ENCODE measurements at regions of chr10 and their contacts with region 1.

Region 1: GRCh38 chr10:13586676-13587355 is at the start of gene PRPF18:
- DNase-seq: peak; percentile 91 to 95 (median 92)
- H3K4me3 ChIP-seq: peak within 1 kb of the TSS; percentile 88 to 95
- H3K4me3 Mint-ChIP-seq: peak within 1 kb of the TSS; percentile 98 to 100 (median 100)
- H3K27ac ChIP-seq: peak within 1 kb of the TSS; percentile 65
- H3K27ac Mint-ChIP-seq: peak within 1 kb of the TSS; percentile 72 to 100 (median 100)
- H3K4me1 ChIP-seq: peaks cover 24% of the 10 kb centered on the region
- H3K4me1 Mint-ChIP-seq: peaks cover 24 to 49% (median 34%) of the 10 kb centered on the region in 4 donors
- H3K27me3 ChIP-seq: no peaks in the 10 kb centered on the region
- H3K27me3 Mint-ChIP-seq: peaks cover 11 to 21% of the 10 kb centered on the region in 2 donors
- total RNA-seq, gene PRPF18: 30.3 TPM

Region 2: DNA sequence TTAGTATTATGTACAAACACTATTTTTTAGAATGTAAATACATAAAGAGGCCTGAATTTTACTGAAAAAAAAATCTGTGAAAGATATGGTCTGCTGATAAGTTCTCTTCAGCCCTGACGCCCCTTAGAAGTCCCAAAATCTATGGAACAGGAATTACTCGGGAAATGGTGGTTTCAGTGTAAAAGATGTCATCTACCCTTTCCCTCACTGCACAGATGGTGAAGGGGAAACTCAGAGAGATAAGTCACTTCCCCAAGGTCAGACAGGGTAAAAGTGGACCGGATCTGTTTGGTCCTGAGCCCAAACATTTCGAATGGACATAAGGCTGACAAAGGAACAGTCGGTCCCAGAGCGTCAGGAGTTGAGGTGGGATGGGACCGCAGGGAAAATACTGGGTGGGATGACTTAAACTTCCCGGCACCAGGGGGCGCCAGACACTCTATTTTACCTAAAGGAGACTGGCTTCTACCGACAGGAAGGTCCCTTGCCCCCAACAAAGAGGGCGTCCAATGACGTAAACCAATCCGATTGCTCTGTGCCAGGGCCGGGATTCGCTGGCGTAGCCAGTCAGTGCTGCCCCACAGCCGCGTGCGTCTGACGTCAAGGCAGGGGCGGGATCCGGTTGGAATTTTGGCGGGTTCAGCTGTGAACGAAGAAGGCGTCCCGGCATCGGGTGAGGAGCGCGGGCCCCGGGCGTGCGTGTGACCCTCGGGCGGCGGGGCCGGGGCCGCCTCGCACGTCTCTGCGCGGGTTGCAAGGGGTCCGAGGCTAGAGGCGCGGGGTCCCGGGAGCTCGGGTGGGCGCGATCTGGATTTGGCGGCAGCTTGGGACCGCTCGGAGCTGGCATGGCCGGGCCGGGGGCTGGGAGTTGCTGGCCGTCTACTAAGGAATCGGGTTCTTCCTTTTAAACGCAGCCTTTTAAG is 425.6 kb before region 1 on chr10 and contains the start of gene MCM10:
- CTCF ChIA-PET with region 1: no interaction called
- POLR2A ChIA-PET with region 1: no interaction called
- intact Hi-C with region 1: loop called (anchors 1 kb)
- DNase-seq: peak; percentile 95 to 99 (median 97)
- H3K4me3 ChIP-seq: peak within 1 kb of the TSS; percentile 50 to 58
- H3K4me3 Mint-ChIP-seq: peak within 1 kb of the TSS; percentile 82 to 94 (median 88)
- H3K27ac ChIP-seq: peak within 1 kb of the TSS; percentile 33
- H3K27ac Mint-ChIP-seq: peak within 1 kb of the TSS; percentile 82 to 94 (median 88)
- H3K4me1 ChIP-seq: peaks cover 15% of the 10 kb centered on the region
- H3K4me1 Mint-ChIP-seq: peaks cover 15 to 36% (median 23%) of the 10 kb centered on the region in 4 donors
- H3K27me3 ChIP-seq: no peaks in the 10 kb centered on the region
- H3K27me3 Mint-ChIP-seq: no peaks in the 10 kb centered on the region
- total RNA-seq, gene MCM10: 0.17 TPM in 1 of 2 experiments, not detected in the other

Region 3: GRCh38 chr10:13348216-13349017 is 238.4 kb before region 1 on chr10 and contains the start of gene SEPHS1:
- CTCF ChIA-PET with region 1: no interaction called
- POLR2A ChIA-PET with region 1: interaction called, 5 read pairs
- intact Hi-C with region 1: loop called (anchors 1 kb)
- DNase-seq: peak; percentile 79 to 87 (median 80)
- H3K4me3 ChIP-seq: peak within 1 kb of the TSS; percentile 89 to 93
- H3K4me3 Mint-ChIP-seq: peak within 1 kb of the TSS; percentile 94 to 97 (median 96)
- H3K27ac ChIP-seq: peak within 1 kb of the TSS; percentile 75
- H3K27ac Mint-ChIP-seq: peak within 1 kb of the TSS; percentile 88 to 97 (median 96)
- H3K4me1 ChIP-seq: peaks cover 50% of the 10 kb centered on the region
- H3K4me1 Mint-ChIP-seq: peaks cover 33 to 76% (median 51%) of the 10 kb centered on the region in 4 donors
- H3K27me3 ChIP-seq: no peaks in the 10 kb centered on the region
- H3K27me3 Mint-ChIP-seq: no peaks in the 10 kb centered on the region
- total RNA-seq, gene SEPHS1: 27.2 to 30.6 TPM

Region 4: DNA sequence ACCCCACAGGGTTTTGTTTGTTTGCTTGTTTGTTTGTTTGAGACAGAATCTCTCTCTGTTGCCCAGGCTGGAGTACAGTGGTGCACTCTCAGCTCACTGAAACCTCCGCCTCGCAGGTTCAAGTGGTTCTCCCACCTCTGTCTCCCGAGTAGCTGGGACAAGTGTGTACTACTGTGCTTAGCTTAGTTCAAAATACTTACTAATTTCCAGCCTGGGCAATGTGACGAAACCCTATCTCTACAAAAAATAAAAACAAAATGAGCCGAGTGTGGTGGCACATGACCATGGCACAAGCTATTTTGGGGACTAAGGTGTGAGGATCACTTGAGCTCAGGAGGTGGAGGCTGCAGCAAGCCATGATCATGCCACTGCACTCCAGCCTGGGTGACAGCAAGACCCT is 15.3 kb before region 1 on chr10:
- CTCF ChIA-PET with region 1: no interaction called
- POLR2A ChIA-PET with region 1: no interaction called
- intact Hi-C with region 1: no loop called
- DNase-seq: no peak
- H3K4me3 ChIP-seq: no peak overlapping the region
- H3K4me3 Mint-ChIP-seq: no peak overlapping the region
- H3K27ac ChIP-seq: no peak overlapping the region
- H3K27ac Mint-ChIP-seq: no peak overlapping the region
- H3K4me1 ChIP-seq: no peaks in the 10 kb centered on the region
- H3K4me1 Mint-ChIP-seq: peaks cover 0 to 2% (median under 1%) of the 10 kb centered on the region in 4 donors
- H3K27me3 ChIP-seq: no peaks in the 10 kb centered on the region
- H3K27me3 Mint-ChIP-seq: peaks cover 13 to 22% of the 10 kb centered on the region in 2 donors

Region 5: GRCh38 chr10:13776861-13777311 is 190.1 kb after region 1 on chr10:
- CTCF ChIA-PET with region 1: interaction called, 4 read pairs
- POLR2A ChIA-PET with region 1: interaction called, 3 read pairs
- intact Hi-C with region 1: loop called (anchors 2 kb)
- DNase-seq: no peak
- H3K4me3 ChIP-seq: no peak overlapping the region
- H3K4me3 Mint-ChIP-seq: no peak overlapping the region
- H3K27ac ChIP-seq: no peak overlapping the region
- H3K27ac Mint-ChIP-seq: no peak overlapping the region
- H3K4me1 ChIP-seq: no peaks in the 10 kb centered on the region
- H3K4me1 Mint-ChIP-seq: peaks cover 0 to 6% (median 2%) of the 10 kb centered on the region in 4 donors
- H3K27me3 ChIP-seq: no peaks in the 10 kb centered on the region
- H3K27me3 Mint-ChIP-seq: peaks cover 20 to 21% of the 10 kb centered on the region in 2 donors

Region 6: DNA sequence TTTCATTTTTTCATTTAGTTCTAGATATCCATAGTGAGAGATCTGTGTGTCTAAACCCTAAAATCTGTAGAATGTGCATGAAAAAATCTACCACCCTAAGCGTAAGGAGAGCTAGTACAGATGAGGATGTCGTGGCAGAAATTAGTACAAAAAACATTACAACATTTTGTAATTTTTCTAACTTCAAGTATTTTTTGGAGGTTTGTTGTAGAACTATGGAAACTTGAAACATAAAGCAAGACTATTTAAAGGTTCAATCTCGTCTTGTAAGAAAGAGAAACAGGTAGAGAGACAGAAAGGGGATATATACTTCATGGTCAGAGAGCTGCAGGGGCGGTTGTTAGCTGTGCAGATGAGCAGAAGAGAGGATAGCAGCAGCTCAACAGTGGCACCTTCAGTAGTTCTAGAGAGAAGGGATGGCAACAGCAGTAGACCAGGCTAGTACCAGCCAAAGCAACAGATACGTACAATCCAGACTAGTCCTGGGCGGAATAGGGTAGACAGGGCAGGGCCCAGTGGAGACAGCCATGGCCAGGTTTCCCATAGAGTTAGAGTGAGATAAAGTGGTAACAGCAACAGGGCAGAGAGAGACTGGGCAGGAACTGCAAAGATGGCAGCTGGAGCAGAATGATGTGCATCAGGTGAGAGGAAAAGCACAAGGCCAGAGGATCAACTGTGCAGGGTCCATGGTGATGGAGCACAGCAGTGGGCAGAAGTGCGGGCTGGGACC is 598.7 kb after region 1 on chr10:
- CTCF ChIA-PET with region 1: no interaction called
- POLR2A ChIA-PET with region 1: interaction called, 5 read pairs
- intact Hi-C with region 1: loop called (anchors 1 kb)
- DNase-seq: peak in 3 of 5 donors; percentile 74 to 85 (median 80)
- H3K4me3 ChIP-seq: peak overlapping the region in 1 of 2 donors; percentile 7
- H3K4me3 Mint-ChIP-seq: peak overlapping the region; percentile 73 to 86 (median 80)
- H3K27ac ChIP-seq: peak overlapping the region; percentile 51
- H3K27ac Mint-ChIP-seq: peak overlapping the region; percentile 93 to 99 (median 98)
- H3K4me1 ChIP-seq: peaks cover 24% of the 10 kb centered on the region
- H3K4me1 Mint-ChIP-seq: peaks cover 21 to 28% (median 24%) of the 10 kb centered on the region in 4 donors
- H3K27me3 ChIP-seq: peaks cover 9% of the 10 kb centered on the region
- H3K27me3 Mint-ChIP-seq: peaks cover 19 to 23% of the 10 kb centered on the region in 2 donors

Region 7: GRCh38 chr10:15106352-15107013 is 1519.7 kb after region 1 on chr10:
- CTCF ChIA-PET with region 1: no interaction called
- POLR2A ChIA-PET with region 1: no interaction called
- intact Hi-C with region 1: loop called (anchors 10 kb)
- DNase-seq: peak; percentile 55 to 68 (median 62)
- H3K4me3 ChIP-seq: no peak overlapping the region
- H3K4me3 Mint-ChIP-seq: peak overlapping the region in 3 of 8 donors; percentile 11 to 48 (median 45)
- H3K27ac ChIP-seq: no peak overlapping the region
- H3K27ac Mint-ChIP-seq: peak overlapping the region; percentile 72 to 85 (median 76)
- H3K4me1 ChIP-seq: peaks cover 4% of the 10 kb centered on the region
- H3K4me1 Mint-ChIP-seq: peaks cover 4 to 9% (median 7%) of the 10 kb centered on the region in 4 donors
- H3K27me3 ChIP-seq: no peaks in the 10 kb centered on the region
- H3K27me3 Mint-ChIP-seq: no peaks in the 10 kb centered on the region

Measured in CD4-positive, alpha-beta memory T cell (primary cell).